BJ (cell line): ENCODE measurements at regions of chr17 and their contacts with region 1.

Region 1: DNA sequence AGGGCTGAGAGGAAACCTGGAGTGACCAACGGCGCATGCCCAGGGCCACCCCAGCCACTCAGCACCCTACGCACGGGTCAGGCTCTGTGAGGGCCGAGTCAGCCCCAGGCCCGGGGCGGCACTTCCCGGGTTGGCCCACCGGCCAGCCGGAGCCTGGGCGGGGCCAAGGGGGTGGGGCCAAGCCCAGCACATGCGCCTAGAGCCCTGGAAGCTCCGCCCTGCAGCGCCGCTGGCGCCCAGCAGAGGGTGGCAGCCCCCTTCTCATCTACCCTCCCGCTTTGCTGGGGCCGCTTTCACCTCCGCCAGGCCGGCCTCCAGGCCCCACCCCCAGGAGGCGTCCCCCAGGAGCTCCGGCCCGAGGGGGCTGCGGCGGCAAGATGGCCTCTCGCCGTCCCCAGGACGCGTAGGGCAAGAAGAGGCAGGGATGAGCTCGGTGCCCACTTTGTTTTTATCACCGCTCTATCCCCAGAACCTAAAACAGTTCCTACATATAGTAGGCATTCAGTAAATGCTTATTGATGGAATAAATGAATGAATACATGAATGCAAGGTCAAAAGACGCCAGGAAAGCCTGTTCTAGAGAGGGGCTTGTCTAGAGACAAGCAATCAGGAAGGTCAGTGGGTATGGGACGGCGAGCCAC is 31.3 kb downstream of the MYO18A start:
- DNase-seq: no peak
- H3K4me3 ChIP-seq: peak overlapping the region; percentile 36
- H3K27me3 ChIP-seq: no peaks in the 10 kb centered on the region
- CTCF ChIP-seq: peak; percentile 89

Region 2: DNA sequence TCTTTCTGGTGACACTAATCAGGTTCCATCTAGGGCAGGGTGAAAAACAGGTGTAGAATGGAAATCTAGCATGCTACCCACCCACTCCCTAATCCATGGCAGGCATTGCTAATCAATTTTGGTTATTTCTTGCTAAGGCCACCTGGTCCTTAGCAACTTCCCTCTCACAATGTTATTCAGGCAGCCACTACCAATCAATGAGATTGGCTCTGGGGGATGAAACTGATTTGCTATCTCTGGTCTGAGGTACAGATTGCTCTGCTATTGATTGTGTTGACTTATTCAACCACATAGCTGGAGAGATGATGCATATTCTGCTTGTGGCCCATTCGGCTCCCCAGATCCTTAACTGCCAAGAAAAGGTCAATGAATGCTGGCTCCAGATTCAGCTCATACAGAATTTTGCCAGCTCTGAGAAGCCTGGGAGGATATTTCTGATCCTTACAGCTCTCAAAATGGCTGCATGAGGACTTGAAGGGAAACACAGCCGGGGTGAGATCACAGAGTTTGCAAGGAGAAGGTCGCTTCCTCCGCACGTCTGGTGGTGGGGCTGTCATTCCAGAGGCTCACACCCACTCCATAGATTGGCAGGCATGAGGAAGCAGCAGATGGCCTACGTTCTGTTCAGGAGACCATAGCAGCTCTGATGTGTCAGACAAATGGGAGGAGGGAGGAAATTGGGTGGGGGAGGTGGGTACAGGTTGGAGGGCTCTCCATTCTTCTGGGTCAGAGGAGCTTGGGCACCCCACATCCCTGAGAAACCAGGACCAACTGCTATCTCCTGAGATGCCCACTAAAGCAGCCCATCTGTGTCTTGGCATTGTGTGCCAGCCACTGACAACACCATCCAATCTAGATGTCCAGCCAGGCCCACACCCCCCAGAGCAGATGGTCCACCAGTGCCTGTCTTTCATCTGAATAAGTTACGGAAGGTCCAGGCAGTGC is 165.4 kb before region 1 on chr17:
- CTCF ChIA-PET with region 1: no interaction called
- POLR2A ChIA-PET with region 1: no interaction called
- DNase-seq: no peak
- H3K4me3 ChIP-seq: no peak overlapping the region
- H3K27me3 ChIP-seq: peaks cover 35% of the 10 kb centered on the region
- CTCF ChIP-seq: no peak

Region 3: DNA sequence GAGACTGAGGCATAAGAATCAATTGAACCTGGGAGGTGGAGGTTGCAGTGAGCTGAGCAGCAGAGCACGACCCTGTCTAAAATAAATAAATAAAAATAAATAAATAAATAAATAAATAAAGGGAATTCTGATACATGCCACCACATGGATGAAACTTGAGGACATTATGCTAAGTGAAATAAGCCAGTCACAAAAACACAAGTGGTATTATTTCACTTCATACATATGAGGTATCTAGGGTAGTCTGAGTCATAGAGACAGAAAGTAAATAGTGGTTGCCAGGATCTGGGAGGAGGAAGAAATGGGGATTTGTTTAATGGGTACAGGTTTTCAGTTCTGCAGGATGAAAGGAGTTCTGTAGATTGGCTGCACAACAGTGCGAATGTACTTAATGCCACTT is 89.6 kb before region 1 on chr17:
- CTCF ChIA-PET with region 1: no interaction called
- POLR2A ChIA-PET with region 1: no interaction called
- DNase-seq: no peak
- H3K4me3 ChIP-seq: no peak overlapping the region
- H3K27me3 ChIP-seq: peaks cover 21% of the 10 kb centered on the region
- CTCF ChIP-seq: no peak

Region 4: GRCh38 chr17:29133146-29133713 is 15.7 kb before region 1 on chr17:
- CTCF ChIA-PET with region 1: interaction called, 78 read pairs
- POLR2A ChIA-PET with region 1: no interaction called
- DNase-seq: no peak
- H3K4me3 ChIP-seq: no peak overlapping the region
- H3K27me3 ChIP-seq: no peaks in the 10 kb centered on the region
- CTCF ChIP-seq: no peak

Region 5: GRCh38 chr17:29190039-29190438 is 41.1 kb after region 1 on chr17:
- CTCF ChIA-PET with region 1: interaction called, 17 read pairs
- POLR2A ChIA-PET with region 1: no interaction called
- DNase-seq: no peak
- H3K4me3 ChIP-seq: no peak overlapping the region
- H3K27me3 ChIP-seq: no peaks in the 10 kb centered on the region; the same call in 1 of the 2 replicates
- CTCF ChIP-seq: no peak

Region 6: GRCh38 chr17:29252101-29252866 is 103.4 kb after region 1 on chr17:
- CTCF ChIA-PET with region 1: interaction called, 12 read pairs
- POLR2A ChIA-PET with region 1: interaction called, 9 read pairs
- DNase-seq: no peak
- H3K4me3 ChIP-seq: no peak overlapping the region
- H3K27me3 ChIP-seq: no peaks in the 10 kb centered on the region
- CTCF ChIP-seq: peak; percentile 44

Region 7: GRCh38 chr17:29369831-29370735 is 221.2 kb after region 1 on chr17:
- CTCF ChIA-PET with region 1: interaction called, 11 read pairs
- POLR2A ChIA-PET with region 1: no interaction called
- DNase-seq: no peak
- H3K4me3 ChIP-seq: no peak overlapping the region
- H3K27me3 ChIP-seq: no peaks in the 10 kb centered on the region
- CTCF ChIP-seq: peak; percentile 57

Region 8: GRCh38 chr17:29617125-29617480 is 468.2 kb after region 1 on chr17:
- CTCF ChIA-PET with region 1: no interaction called
- POLR2A ChIA-PET with region 1: no interaction called
- DNase-seq: no peak
- H3K4me3 ChIP-seq: no peak overlapping the region
- H3K27me3 ChIP-seq: no peaks in the 10 kb centered on the region
- CTCF ChIP-seq: peak; percentile 68